A549 (cell line): ENCODE measurements at regions of chr15 and their contacts with region 1.

Region 1: DNA sequence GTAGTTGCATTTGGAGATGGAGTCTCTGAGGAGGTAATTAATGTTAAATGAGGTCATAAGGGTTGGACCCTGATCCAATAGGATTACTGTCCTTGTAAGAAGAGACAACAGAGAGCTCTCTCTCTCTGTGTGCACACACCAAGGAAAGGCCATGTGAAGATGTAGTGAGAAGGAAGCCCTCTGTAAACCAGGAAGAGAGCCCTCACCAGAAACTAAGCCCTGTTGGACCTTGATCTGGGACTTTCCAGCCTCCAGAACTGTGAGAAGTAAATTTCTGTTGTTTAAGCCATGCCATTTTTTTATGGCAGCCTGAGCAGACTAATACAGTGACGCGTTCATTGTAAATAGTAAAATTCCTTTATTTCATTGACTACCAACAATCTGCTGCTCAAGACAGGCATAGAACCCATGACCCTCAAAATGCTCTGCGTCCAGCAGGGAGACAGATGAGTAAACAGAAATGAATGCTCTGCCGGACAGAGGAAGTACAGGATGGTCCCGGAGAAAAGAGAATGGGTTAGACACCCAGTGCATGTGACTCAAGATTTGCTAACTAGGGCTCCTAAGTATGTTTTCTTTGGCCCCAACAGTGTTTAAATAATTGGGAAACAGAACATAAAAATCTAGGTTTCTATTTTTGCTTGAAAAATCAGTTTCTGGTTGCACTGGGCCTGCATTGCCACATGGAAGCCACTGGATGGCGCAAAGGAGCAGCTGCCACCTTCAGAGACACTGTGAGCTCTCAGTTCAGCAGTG is 37.9 kb upstream of the TNFAIP8L3 start:
- DNase-seq: peak; percentile 55 to 69
- ATAC-seq: peak; percentile 74 to 89
- H3K4me3 ChIP-seq: no peak overlapping the region
- H3K27ac ChIP-seq: peak overlapping the region; percentile 54 to 57
- H3K4me1 ChIP-seq: peaks cover 13% of the 10 kb centered on the region
- CTCF ChIP-seq: peak; percentile 86
- EP300 ChIP-seq: no peak
- POLR2A ChIP-seq: no peak
- RAD21 ChIP-seq: peak; percentile 68 to 69

Region 2: GRCh38 chr15:51077221-51078153 is 55.1 kb before region 1 on chr15:
- CTCF ChIA-PET with region 1: interaction called, 10 read pairs
- POLR2A ChIA-PET with region 1: no interaction called
- DNase-seq: no peak
- ATAC-seq: no peak
- H3K4me3 ChIP-seq: no peak overlapping the region
- H3K27ac ChIP-seq: no peak overlapping the region
- H3K4me1 ChIP-seq: no peaks in the 10 kb centered on the region
- CTCF ChIP-seq: no peak
- EP300 ChIP-seq: no peak
- POLR2A ChIP-seq: no peak
- RAD21 ChIP-seq: no peak

Region 3: DNA sequence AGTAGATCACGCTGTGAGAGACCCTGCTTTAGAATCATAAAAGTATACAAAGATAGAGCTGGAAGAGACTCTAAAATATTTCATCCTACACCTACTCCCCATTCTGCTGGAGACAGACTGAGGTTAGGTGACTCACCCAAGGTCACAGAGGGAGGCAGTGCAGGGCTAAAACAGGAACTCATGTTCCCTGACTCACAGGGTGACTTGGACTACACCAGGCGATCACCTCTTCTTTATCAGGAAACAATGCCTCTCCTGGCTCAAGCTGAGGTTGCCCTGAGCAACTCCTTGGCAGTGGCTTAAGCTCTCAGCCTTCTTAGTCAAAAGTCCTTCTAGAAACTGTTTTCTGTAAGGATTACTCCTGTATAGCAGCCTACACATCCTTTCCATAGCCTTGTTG is 11.4 kb before region 1 on chr15:
- CTCF ChIA-PET with region 1: interaction called, 16 read pairs
- POLR2A ChIA-PET with region 1: no interaction called
- DNase-seq: peak; percentile 71 to 85
- ATAC-seq: peak; percentile 99 to 100
- H3K4me3 ChIP-seq: no peak overlapping the region
- H3K27ac ChIP-seq: peak overlapping the region; percentile 58 to 66; a peak in 5 of 6 replicates
- H3K4me1 ChIP-seq: peaks cover 16% of the 10 kb centered on the region
- CTCF ChIP-seq: no peak
- EP300 ChIP-seq: no peak
- POLR2A ChIP-seq: no peak
- RAD21 ChIP-seq: no peak

Region 4: DNA sequence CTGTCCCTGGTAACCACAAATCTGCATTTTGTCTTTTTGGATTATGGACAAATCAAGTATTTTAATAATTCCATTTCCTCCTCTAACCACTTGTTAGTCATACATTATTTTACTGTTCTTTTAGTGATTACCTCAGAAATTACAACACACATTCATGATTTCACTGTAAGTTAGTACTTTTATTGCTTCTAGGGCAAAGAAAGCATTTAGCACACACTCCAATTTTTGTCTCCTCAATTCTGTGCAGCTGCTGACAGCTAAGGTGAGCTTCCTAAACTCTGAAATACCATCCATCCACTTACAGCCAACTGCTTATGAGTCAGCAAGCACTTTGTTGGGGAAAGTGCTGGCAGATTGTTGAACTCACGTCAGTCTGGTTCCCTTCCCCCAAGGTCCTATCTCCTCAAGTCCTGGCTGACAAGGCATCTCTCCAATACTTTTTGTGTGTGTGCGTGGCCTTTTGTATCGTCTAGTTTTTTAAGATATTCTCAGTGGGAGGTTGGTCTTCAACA is 11.5 kb after region 1 on chr15:
- CTCF ChIA-PET with region 1: interaction called, 13 read pairs
- POLR2A ChIA-PET with region 1: no interaction called
- DNase-seq: peak; percentile 25 to 57
- ATAC-seq: peak; percentile 68 to 74; a peak in 5 of 6 replicates
- H3K4me3 ChIP-seq: no peak overlapping the region
- H3K27ac ChIP-seq: peak overlapping the region in 1 of 2 experiments; percentile 25; a peak in 2 of 6 replicates
- H3K4me1 ChIP-seq: peaks cover 9% of the 10 kb centered on the region; the same call in 1 of the 3 replicates
- CTCF ChIP-seq: no peak
- EP300 ChIP-seq: no peak
- POLR2A ChIP-seq: no peak
- RAD21 ChIP-seq: no peak